ENCODE measurements at regions of chr14 and their contacts with region 1.

Region 1: DNA sequence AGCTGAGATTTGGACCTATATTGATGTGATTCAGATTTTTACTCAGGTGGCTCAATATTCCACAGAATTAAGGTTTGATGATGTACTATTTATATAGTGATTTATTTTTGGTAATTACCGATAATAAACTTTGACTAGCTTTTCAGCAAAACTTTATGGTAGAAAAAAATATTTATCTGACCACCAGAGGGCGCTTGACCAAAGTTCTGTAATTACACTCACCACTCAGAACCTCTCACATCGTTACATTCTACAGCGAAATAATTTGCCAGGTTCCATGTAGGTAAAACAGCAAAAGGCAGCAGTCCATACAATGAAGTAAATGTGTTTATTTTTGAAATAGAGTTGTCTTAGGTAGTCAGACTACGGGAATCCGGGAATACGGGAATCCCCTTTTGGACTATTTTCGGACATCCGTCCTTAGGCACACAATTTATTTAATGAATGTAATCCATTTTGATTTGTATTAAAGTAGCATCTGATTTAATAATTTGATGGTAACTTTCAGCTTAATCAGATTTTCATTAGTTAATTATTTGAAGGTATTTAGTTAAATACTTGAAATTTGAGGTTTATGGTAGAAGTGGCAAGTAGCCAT is 143.0 kb upstream of the DDHD1 start:
- DNase-seq: peak in 2 of 5 donors; percentile 49 to 53
- H3K4me3 ChIP-seq: no peak overlapping the region
- H3K27ac ChIP-seq: no peak overlapping the region
- H3K4me1 ChIP-seq: no peaks in the 10 kb centered on the region
- H3K27me3 ChIP-seq: no peaks in the 10 kb centered on the region
- CTCF ChIP-seq: peak; percentile 54

Region 2: GRCh38 chr14:54356172-54356571 is 1060.1 kb after region 1 on chr14:
- intact Hi-C with region 1: loop called (anchors 10 kb)
- DNase-seq: no peak
- H3K4me3 ChIP-seq: no peak overlapping the region
- H3K27ac ChIP-seq: no peak overlapping the region
- H3K4me1 ChIP-seq: no peaks in the 10 kb centered on the region
- H3K27me3 ChIP-seq: no peaks in the 10 kb centered on the region
- CTCF ChIP-seq: no peak